CD4-positive, alpha-beta memory T cell (primary cell): ENCODE measurements at regions of chr2 and their contacts with region 1.

Region 1: GRCh38 chr2:84781942-84782716 is 98.8 kb downstream of the TRABD2A start:
- DNase-seq: peak; percentile 59 to 84 (median 71)
- H3K4me3 ChIP-seq: peak overlapping the region; percentile 6 to 23
- H3K4me3 Mint-ChIP-seq: peak overlapping the region; percentile 52 to 84 (median 74)
- H3K27ac ChIP-seq: peak overlapping the region; percentile 53
- H3K27ac Mint-ChIP-seq: peak overlapping the region; percentile 84 to 96 (median 93)
- H3K4me1 ChIP-seq: peaks cover 80% of the 10 kb centered on the region
- H3K4me1 Mint-ChIP-seq: peaks cover 80 to 93% (median 84%) of the 10 kb centered on the region in 4 donors
- H3K27me3 ChIP-seq: no peaks in the 10 kb centered on the region
- H3K27me3 Mint-ChIP-seq: no peaks in the 10 kb centered on the region

Region 2: GRCh38 chr2:84516234-84516986 is 265.7 kb before region 1 on chr2 and contains the start of gene DNAH6:
- CTCF ChIA-PET with region 1: no interaction called
- POLR2A ChIA-PET with region 1: no interaction called
- intact Hi-C with region 1: loop called (anchors 10 kb)
- DNase-seq: peak; percentile 87 to 94 (median 92)
- H3K4me3 ChIP-seq: peak within 1 kb of the TSS; percentile 27 to 62
- H3K4me3 Mint-ChIP-seq: peak within 1 kb of the TSS; percentile 91 to 96 (median 92)
- H3K27ac ChIP-seq: peak within 1 kb of the TSS; percentile 47
- H3K27ac Mint-ChIP-seq: peak within 1 kb of the TSS; percentile 88 to 99 (median 97)
- H3K4me1 ChIP-seq: peaks cover 15% of the 10 kb centered on the region
- H3K4me1 Mint-ChIP-seq: peaks cover 13 to 27% (median 16%) of the 10 kb centered on the region in 4 donors
- H3K27me3 ChIP-seq: no peaks in the 10 kb centered on the region
- H3K27me3 Mint-ChIP-seq: peaks cover 0 to 3% of the 10 kb centered on the region in 2 donors
- total RNA-seq, gene DNAH6: 1.9 to 2.9 TPM

Region 3: GRCh38 chr2:84741296-84741765 is 40.8 kb before region 1 on chr2:
- CTCF ChIA-PET with region 1: interaction called, 19 read pairs
- POLR2A ChIA-PET with region 1: interaction called, 13 read pairs
- intact Hi-C with region 1: loop called (anchors 2 kb)
- DNase-seq: peak; percentile 47 to 58 (median 51)
- H3K4me3 ChIP-seq: no peak overlapping the region
- H3K4me3 Mint-ChIP-seq: peak overlapping the region in 4 of 8 donors; percentile 12 to 39 (median 28)
- H3K27ac ChIP-seq: no peak overlapping the region
- H3K27ac Mint-ChIP-seq: peak overlapping the region in 6 of 7 donors; percentile 17 to 87 (median 64)
- H3K4me1 ChIP-seq: peaks cover 22% of the 10 kb centered on the region
- H3K4me1 Mint-ChIP-seq: peaks cover 15 to 28% (median 21%) of the 10 kb centered on the region in 4 donors
- H3K27me3 ChIP-seq: no peaks in the 10 kb centered on the region
- H3K27me3 Mint-ChIP-seq: no peaks in the 10 kb centered on the region

Region 4: GRCh38 chr2:84840306-84840705 is 58.2 kb after region 1 on chr2:
- CTCF ChIA-PET with region 1: interaction called, 9 read pairs
- POLR2A ChIA-PET with region 1: interaction called, 121 read pairs
- intact Hi-C with region 1: no loop called
- DNase-seq: peak in 1 of 5 donors; percentile 10
- H3K4me3 ChIP-seq: peak overlapping the region in 1 of 2 donors; percentile 39
- H3K4me3 Mint-ChIP-seq: peak overlapping the region; percentile 63 to 87 (median 80)
- H3K27ac ChIP-seq: peak overlapping the region; percentile 61
- H3K27ac Mint-ChIP-seq: peak overlapping the region; percentile 92 to 98 (median 96)
- H3K4me1 ChIP-seq: peaks cover 88% of the 10 kb centered on the region
- H3K4me1 Mint-ChIP-seq: peaks cover 74 to 91% (median 84%) of the 10 kb centered on the region in 4 donors
- H3K27me3 ChIP-seq: no peaks in the 10 kb centered on the region
- H3K27me3 Mint-ChIP-seq: no peaks in the 10 kb centered on the region

Region 5: GRCh38 chr2:84856787-84857186 is 74.7 kb after region 1 on chr2:
- CTCF ChIA-PET with region 1: interaction called, 17 read pairs
- POLR2A ChIA-PET with region 1: interaction called, 121 read pairs
- intact Hi-C with region 1: no loop called
- DNase-seq: peak in 3 of 5 donors; percentile 29 to 51 (median 30)
- H3K4me3 ChIP-seq: peak overlapping the region in 1 of 2 donors; percentile 23
- H3K4me3 Mint-ChIP-seq: peak overlapping the region; percentile 40 to 89 (median 77)
- H3K27ac ChIP-seq: peak overlapping the region; percentile 53
- H3K27ac Mint-ChIP-seq: peak overlapping the region; percentile 83 to 97 (median 96)
- H3K4me1 ChIP-seq: peaks cover 98% of the 10 kb centered on the region
- H3K4me1 Mint-ChIP-seq: peaks cover 84 to 97% (median 91%) of the 10 kb centered on the region in 4 donors
- H3K27me3 ChIP-seq: no peaks in the 10 kb centered on the region
- H3K27me3 Mint-ChIP-seq: no peaks in the 10 kb centered on the region